ENCODE measurements at regions of chr11 and their contacts with region 1.

Region 1: DNA sequence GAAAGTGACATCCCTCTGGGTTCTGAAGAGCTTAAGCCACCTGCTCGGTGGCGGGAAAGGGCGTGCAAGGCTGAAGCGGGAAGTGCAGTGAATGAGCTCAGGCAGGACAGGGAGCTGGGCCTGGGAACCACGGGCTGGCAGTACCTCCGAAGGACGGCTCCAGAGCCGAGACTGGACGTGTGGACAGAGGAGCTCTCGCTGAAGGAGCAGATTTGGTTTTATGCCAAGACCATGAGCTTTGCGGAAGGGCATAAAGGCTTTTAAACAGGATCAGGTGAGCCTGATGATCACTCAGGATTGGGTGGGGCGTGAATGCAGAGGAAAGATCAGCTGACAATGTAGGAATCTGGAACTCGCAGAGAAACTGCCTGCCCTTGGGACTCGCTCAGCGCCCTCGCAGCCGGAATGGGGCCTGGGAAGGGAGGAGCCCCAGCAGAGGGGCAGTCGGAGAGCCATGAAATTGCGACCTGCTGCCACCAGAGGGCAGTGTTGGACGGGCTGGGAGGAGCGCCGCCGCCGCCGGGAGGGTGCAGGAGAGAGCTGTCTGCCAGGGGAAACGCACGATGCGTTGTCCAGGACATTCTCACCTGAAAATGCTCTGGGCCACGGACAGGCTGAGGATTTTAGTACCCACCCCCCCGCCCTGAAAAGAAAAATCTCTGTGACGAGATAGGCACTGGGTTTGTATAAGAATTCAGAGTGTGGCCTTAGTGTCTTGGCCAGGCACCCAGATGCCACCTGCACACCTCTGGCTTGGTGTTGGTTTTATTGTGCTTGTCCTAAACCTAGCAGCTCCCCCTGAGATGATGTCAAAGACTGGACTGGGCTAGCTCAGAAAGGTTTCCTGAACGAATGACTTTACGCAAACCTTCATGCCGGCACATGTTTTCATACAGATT is 324.4 kb downstream of the NTM start:
- DNase-seq: peak; percentile 92
- ATAC-seq: peak; percentile 85
- H3K4me3 Mint-ChIP-seq: peak overlapping the region; percentile 38
- H3K27ac Mint-ChIP-seq: no peak overlapping the region
- H3K4me1 Mint-ChIP-seq: peaks cover 9% of the 10 kb centered on the region
- H3K27me3 Mint-ChIP-seq: peaks cover 45% of the 10 kb centered on the region
- CTCF ChIP-seq: peak; percentile 96

Region 2: DNA sequence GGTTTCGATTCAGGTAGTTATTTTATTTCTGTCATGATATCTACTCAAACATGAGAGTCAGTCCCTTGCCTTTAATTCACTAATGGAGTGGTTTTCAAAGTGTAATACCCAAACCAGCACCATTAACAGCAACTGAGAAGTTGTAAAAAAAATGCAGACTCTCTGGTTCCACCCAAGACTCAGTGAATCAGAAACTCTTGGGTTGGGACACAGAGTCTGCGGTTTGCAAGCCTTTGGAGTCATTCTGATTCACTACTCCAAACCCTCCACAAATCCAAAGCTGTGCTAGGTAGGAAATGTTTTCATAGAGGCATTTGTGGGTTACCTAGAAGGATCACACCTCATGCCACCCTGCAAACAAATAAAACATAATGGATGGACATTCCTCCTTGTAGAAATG is 15.7 kb after region 1 on chr11:
- CTCF ChIA-PET with region 1: interaction called, 21 read pairs
- POLR2A ChIA-PET with region 1: no interaction called
- DNase-seq: no peak
- ATAC-seq: no peak
- H3K4me3 Mint-ChIP-seq: no peak overlapping the region
- H3K27ac Mint-ChIP-seq: no peak overlapping the region
- H3K4me1 Mint-ChIP-seq: no peaks in the 10 kb centered on the region
- H3K27me3 Mint-ChIP-seq: no peaks in the 10 kb centered on the region
- CTCF ChIP-seq: no peak

Region 3: GRCh38 chr11:131737357-131737756 is 42.6 kb after region 1 on chr11:
- CTCF ChIA-PET with region 1: interaction called, 16 read pairs
- POLR2A ChIA-PET with region 1: no interaction called
- DNase-seq: no peak
- ATAC-seq: peak; percentile 44; the same call in 1 of the 2 replicates
- H3K4me3 Mint-ChIP-seq: no peak overlapping the region
- H3K27ac Mint-ChIP-seq: no peak overlapping the region
- H3K4me1 Mint-ChIP-seq: peaks cover 5% of the 10 kb centered on the region
- H3K27me3 Mint-ChIP-seq: no peaks in the 10 kb centered on the region; the same call in 1 of the 2 replicates
- CTCF ChIP-seq: no peak

Region 4: DNA sequence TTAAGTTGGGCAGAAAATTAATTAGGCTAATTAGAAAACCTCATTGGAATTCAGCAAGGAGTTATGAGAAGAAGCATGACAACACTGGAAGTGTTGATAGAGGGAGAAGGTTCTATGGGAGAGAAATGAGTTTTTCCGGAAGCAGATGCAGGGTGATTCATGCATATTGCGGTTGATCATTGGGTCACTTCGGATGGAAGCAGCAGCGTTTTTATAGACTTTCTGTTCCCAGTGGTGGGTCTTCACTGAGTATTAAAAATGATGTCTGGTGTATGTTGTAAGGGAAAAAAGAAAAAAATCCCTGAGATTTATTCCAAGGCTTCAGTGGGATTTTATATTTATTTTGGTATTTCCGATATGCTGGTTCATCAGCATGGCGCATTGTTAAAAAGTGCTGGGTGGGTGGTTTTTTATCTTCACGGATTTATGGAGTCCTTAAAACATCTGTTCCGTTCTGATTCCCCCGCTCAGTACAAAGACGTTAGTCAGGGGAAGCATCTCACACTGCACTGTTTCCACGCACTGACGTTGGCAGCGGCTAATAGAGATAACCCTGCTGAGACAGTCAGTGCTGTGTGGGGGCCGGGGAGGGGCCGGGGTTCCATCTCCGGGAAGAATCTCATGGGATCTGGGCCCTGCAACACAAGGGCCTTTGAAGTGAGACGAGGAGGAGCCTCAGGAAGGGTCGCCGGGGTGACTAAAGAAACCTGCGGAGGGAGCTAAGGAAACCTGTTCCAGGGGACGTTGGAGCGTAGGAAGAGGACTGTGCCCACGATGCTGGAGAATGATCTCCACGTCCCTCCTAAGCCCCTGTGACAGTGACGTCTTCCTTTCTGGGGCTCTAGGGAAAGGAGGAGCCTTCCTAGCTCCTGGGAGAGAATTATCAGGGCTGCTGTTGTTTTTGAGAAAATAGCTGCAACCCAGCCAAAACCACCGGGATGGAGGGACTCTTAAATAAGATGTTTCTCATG is 65.6 kb after region 1 on chr11:
- CTCF ChIA-PET with region 1: interaction called, 14 read pairs
- POLR2A ChIA-PET with region 1: no interaction called
- DNase-seq: peak; percentile 64
- ATAC-seq: peak; percentile 91
- H3K4me3 Mint-ChIP-seq: no peak overlapping the region
- H3K27ac Mint-ChIP-seq: no peak overlapping the region
- H3K4me1 Mint-ChIP-seq: peaks cover 20% of the 10 kb centered on the region
- H3K27me3 Mint-ChIP-seq: no peaks in the 10 kb centered on the region
- CTCF ChIP-seq: no peak

Region 5: GRCh38 chr11:131838016-131838415 is 143.2 kb after region 1 on chr11:
- CTCF ChIA-PET with region 1: no interaction called
- POLR2A ChIA-PET with region 1: no interaction called
- DNase-seq: no peak
- ATAC-seq: no peak
- H3K4me3 Mint-ChIP-seq: no peak overlapping the region
- H3K27ac Mint-ChIP-seq: no peak overlapping the region
- H3K4me1 Mint-ChIP-seq: peaks cover 17% of the 10 kb centered on the region
- H3K27me3 Mint-ChIP-seq: no peaks in the 10 kb centered on the region; the same call in none of the 2 replicates
- CTCF ChIP-seq: no peak

Region 6: DNA sequence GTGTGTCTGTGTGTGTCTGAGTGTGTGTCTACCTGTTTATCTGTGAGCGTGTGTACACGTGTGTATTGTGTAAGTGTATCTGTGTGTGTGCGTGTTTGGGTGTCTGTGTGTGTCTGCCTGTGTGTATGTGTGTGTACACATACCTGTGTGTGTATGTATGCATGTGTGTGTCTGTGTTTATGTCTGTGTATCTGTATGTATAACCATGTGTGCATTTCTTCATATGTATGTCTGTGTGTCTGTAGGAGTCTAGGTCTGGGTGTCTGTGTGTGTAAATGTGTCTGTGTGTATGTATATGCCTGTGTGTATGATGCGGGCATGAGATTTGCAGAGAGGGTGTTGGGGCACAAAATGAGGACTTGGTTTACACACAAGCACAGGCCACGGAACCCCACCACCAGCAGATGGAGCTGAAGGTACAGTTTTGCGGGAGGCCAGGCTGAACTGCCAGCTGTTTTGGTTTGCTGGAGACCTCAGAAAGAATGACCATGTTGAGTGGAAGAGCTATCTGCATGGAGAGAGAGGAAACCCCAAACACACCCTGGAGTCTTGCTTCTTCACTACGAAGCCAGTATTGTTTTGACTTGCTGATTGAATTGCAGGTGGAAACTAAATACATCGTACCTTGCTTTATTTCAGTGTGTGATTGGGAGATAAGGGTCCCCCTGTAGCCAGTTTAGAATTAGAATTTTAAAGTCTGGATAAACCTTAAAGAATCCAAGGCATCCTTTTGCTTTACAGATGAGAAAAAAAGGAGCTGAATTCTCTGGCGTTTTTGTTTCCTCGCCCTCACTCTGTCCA is 172.9 kb after region 1 on chr11:
- CTCF ChIA-PET with region 1: interaction called, 57 read pairs
- POLR2A ChIA-PET with region 1: no interaction called
- DNase-seq: peak; percentile 79
- ATAC-seq: peak; percentile 69
- H3K4me3 Mint-ChIP-seq: no peak overlapping the region
- H3K27ac Mint-ChIP-seq: peak overlapping the region; percentile 69
- H3K4me1 Mint-ChIP-seq: peaks cover 63% of the 10 kb centered on the region
- H3K27me3 Mint-ChIP-seq: no peaks in the 10 kb centered on the region
- CTCF ChIP-seq: peak; percentile 41

Region 7: GRCh38 chr11:131899950-131900580 is 205.3 kb after region 1 on chr11:
- CTCF ChIA-PET with region 1: interaction called, 14 read pairs
- POLR2A ChIA-PET with region 1: interaction called, 3 read pairs
- DNase-seq: no peak
- ATAC-seq: no peak
- H3K4me3 Mint-ChIP-seq: no peak overlapping the region
- H3K27ac Mint-ChIP-seq: no peak overlapping the region
- H3K4me1 Mint-ChIP-seq: peaks cover 41% of the 10 kb centered on the region
- H3K27me3 Mint-ChIP-seq: no peaks in the 10 kb centered on the region
- CTCF ChIP-seq: no peak

Region 8: DNA sequence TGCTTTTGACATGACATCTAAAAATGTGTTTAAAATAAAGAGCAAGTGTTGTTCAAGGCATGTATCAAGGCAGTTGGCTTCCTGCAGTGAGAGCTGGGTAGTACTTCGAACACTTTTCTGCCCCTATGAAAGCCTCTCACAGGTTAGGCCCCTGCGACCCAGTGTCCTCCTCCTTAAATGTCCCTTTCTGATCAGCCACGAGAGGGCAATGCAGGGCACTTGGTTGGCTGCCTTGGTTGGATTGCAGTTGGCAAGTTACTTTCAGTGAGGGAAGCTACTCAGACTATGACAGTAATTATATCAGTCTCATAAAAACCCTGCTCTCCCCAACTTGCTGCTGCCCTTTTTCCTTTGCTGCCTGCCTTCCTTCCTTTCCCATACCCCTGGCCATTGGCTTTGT is 419.4 kb after region 1 on chr11:
- CTCF ChIA-PET with region 1: interaction called, 11 read pairs
- POLR2A ChIA-PET with region 1: no interaction called
- DNase-seq: peak; percentile 72
- ATAC-seq: peak; percentile 83
- H3K4me3 Mint-ChIP-seq: no peak overlapping the region
- H3K27ac Mint-ChIP-seq: no peak overlapping the region
- H3K4me1 Mint-ChIP-seq: peaks cover 56% of the 10 kb centered on the region
- H3K27me3 Mint-ChIP-seq: no peaks in the 10 kb centered on the region
- CTCF ChIP-seq: no peak

Measured in WTC11 (cell line).